Activated CD4-positive, alpha-beta T cell treated with anti-CD3 and anti-CD28 coated beads for 36 hours (primary cell): ENCODE measurements at regions of chr1 and their contacts with region 1.

Region 1: DNA sequence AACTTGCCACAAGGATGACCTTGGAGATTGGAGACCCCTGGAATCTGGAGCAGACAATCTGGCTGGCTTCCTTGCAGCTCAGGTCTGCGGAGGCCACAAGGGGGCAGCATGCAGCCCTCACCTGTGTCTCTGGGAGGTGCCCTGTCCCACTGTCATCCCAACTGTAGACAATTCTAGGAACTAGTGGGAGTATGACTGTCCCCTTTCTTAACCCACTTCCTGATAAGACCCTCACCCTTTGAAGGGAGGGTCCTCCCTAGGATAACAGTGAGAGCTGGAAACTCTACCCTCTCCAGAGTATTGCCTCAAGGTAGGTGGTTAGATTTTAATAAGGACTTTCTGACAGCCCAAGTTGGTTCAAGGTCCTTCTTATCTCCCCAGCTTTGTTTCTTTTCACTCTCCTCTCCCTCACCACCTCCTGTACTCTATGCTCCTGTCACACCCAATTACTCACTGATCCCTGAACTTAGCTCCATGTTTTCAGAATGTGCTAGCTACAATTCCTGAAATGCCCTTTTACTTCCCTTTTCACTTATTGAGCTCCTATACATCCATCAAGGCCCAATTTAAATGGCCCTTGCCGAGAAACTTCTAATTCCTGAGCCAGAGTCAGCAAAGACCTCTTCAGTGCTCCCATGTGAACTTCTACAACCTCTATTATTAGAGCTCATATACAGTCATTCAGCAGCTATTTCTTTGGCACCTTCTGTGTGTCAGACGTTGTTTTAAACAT is 9.2 kb upstream of the KCNQ4 start:
- DNase-seq: peak; percentile 81
- ATAC-seq: peak; percentile 68
- H3K4me3 Mint-ChIP-seq: no peak overlapping the region
- H3K27ac Mint-ChIP-seq: no peak overlapping the region
- H3K4me1 Mint-ChIP-seq: no peaks in the 10 kb centered on the region
- H3K27me3 Mint-ChIP-seq: no peaks in the 10 kb centered on the region

Region 2: GRCh38 chr1:40612345-40612831 is 162.0 kb before region 1 on chr1:
- CTCF ChIA-PET with region 1: interaction called, 4 read pairs
- POLR2A ChIA-PET with region 1: no interaction called
- intact Hi-C with region 1: loop called (anchors 1 to 5 kb)
- DNase-seq: peak; percentile 84
- ATAC-seq: peak; percentile 97
- H3K4me3 Mint-ChIP-seq: no peak overlapping the region
- H3K27ac Mint-ChIP-seq: no peak overlapping the region
- H3K4me1 Mint-ChIP-seq: no peaks in the 10 kb centered on the region
- H3K27me3 Mint-ChIP-seq: no peaks in the 10 kb centered on the region

Region 3: DNA sequence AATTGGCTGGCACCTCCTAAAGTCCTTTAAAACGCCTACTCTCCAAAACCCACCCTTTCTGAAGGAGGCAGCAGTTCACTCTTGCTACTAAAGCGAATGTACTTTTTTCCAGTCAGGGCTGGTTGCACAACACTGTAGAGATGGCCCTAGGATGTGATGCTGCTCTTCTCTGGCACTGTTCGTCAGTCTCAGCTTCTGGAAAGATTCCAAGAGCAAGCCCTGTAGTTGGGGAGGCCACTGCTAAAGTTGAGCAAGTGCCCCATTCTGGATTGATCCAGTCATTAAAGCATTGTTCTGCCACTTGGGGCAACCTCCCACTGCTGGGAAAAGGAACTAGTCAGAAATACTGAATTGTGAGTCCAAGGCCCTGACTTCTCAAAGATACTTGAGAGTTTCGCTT is 19.4 kb before region 1 on chr1:
- CTCF ChIA-PET with region 1: interaction called, 48 read pairs
- POLR2A ChIA-PET with region 1: no interaction called
- intact Hi-C with region 1: no loop called
- DNase-seq: no peak
- ATAC-seq: no peak
- H3K4me3 Mint-ChIP-seq: no peak overlapping the region
- H3K27ac Mint-ChIP-seq: no peak overlapping the region
- H3K4me1 Mint-ChIP-seq: peaks cover 27% of the 10 kb centered on the region
- H3K27me3 Mint-ChIP-seq: no peaks in the 10 kb centered on the region

Region 4: GRCh38 chr1:40763742-40764532 is 10.5 kb before region 1 on chr1:
- CTCF ChIA-PET with region 1: interaction called, 36 read pairs
- POLR2A ChIA-PET with region 1: no interaction called
- intact Hi-C with region 1: no loop called
- DNase-seq: no peak
- ATAC-seq: peak; percentile 89
- H3K4me3 Mint-ChIP-seq: peak overlapping the region; percentile 24
- H3K27ac Mint-ChIP-seq: peak overlapping the region; percentile 93
- H3K4me1 Mint-ChIP-seq: peaks cover 35% of the 10 kb centered on the region
- H3K27me3 Mint-ChIP-seq: no peaks in the 10 kb centered on the region

Region 5: DNA sequence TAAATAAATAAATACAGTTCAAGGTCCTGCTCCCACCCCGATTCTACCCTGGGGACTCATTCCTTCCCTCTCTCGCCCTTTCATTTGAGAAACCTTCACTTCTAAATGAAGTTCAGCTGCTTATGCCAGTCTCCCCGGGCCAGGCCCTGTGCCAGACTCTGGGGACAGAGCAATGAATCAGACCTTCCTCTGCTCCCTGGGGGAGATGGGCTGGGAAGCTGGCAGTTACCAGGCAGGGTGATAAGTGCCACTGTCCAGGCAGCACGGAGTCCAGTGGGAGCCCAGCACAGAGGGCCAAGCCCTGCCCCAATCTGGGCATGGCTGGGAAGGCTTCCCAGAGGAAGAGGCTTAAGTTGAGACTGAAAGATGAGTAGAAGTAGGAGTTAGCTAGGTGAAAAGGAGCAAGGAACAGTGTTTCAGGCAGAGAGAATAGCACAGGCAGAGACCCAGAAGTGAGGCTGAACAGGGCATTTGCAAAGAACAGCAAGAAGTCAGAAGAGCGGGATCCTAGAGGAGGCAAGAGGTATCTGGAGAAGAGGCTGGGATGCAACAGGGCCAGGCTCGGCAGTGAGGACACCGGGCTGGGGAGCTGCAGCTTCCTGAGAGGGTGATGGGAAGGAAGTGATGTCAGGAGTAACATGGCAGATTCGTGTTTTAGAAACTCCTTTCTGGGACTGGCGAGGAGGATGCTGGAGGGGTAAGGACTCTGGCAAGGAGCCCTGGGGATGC is 22.7 kb after region 1 on chr1:
- CTCF ChIA-PET with region 1: interaction called, 21 read pairs
- POLR2A ChIA-PET with region 1: no interaction called
- intact Hi-C with region 1: no loop called
- DNase-seq: no peak
- ATAC-seq: no peak
- H3K4me3 Mint-ChIP-seq: no peak overlapping the region
- H3K27ac Mint-ChIP-seq: peak overlapping the region; percentile 56
- H3K4me1 Mint-ChIP-seq: peaks cover 47% of the 10 kb centered on the region
- H3K27me3 Mint-ChIP-seq: no peaks in the 10 kb centered on the region

Region 6: GRCh38 chr1:40849801-40850592 is 75.6 kb after region 1 on chr1:
- CTCF ChIA-PET with region 1: interaction called, 69 read pairs
- POLR2A ChIA-PET with region 1: no interaction called
- intact Hi-C with region 1: loop called (anchors 1 kb)
- DNase-seq: peak; percentile 88
- ATAC-seq: peak; percentile 90
- H3K4me3 Mint-ChIP-seq: no peak overlapping the region
- H3K27ac Mint-ChIP-seq: no peak overlapping the region
- H3K4me1 Mint-ChIP-seq: peaks cover 10% of the 10 kb centered on the region
- H3K27me3 Mint-ChIP-seq: no peaks in the 10 kb centered on the region